Activated CD8-positive, alpha-beta T cell treated with anti-CD3 and anti-CD28 coated beads for 36 hours (primary cell): ENCODE measurements at regions of chr6 and their contacts with region 1.

Region 1: DNA sequence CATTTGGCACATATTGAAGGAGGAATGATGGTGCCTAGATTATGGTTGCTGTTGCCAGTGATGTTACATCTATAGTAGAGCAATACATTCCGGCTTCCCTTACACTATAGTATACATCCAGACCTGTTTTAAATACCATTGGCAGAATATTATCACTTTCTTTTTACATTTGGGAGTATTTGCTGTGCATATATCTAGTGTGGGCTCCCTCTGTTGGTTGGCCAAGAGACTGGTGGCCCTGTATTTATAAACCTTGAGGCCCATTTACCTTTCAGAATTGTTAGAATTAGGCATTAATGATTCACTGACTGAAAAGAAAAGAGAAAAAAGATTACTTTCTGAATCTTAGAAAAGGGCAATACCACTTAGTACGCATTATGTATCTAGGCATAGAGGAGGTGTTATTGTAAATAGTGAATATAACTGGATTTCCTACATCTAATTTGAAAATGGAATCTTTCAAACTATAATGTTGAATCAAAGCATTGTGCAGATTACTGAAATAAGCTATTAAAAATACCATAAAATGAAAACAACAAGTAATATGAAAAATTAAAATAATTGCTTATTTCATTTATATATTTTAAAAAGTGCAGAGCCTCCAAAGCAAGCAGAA is 628.8 kb upstream of the MAN1A1 start:
- DNase-seq: peak; percentile 22
- ATAC-seq: no peak
- H3K4me3 Mint-ChIP-seq: no peak overlapping the region
- H3K27ac Mint-ChIP-seq: no peak overlapping the region
- H3K4me1 Mint-ChIP-seq: no peaks in the 10 kb centered on the region
- H3K27me3 Mint-ChIP-seq: no peaks in the 10 kb centered on the region
- CTCF ChIP-seq: no peak

Region 2: GRCh38 chr6:119742188-119742803 is 236.1 kb before region 1 on chr6:
- CTCF ChIA-PET with region 1: interaction called, 3 read pairs
- POLR2A ChIA-PET with region 1: no interaction called
- intact Hi-C with region 1: loop called (anchors 10 kb)
- DNase-seq: peak; percentile 84
- ATAC-seq: peak; percentile 51
- H3K4me3 Mint-ChIP-seq: no peak overlapping the region
- H3K27ac Mint-ChIP-seq: no peak overlapping the region
- H3K4me1 Mint-ChIP-seq: no peaks in the 10 kb centered on the region
- H3K27me3 Mint-ChIP-seq: peaks cover 3% of the 10 kb centered on the region
- CTCF ChIP-seq: peak; percentile 81

Region 3: GRCh38 chr6:120103616-120104015 is 125.2 kb after region 1 on chr6:
- CTCF ChIA-PET with region 1: no interaction called
- POLR2A ChIA-PET with region 1: no interaction called
- intact Hi-C with region 1: no loop called
- DNase-seq: no peak
- ATAC-seq: no peak
- H3K4me3 Mint-ChIP-seq: no peak overlapping the region
- H3K27ac Mint-ChIP-seq: no peak overlapping the region
- H3K4me1 Mint-ChIP-seq: no peaks in the 10 kb centered on the region
- H3K27me3 Mint-ChIP-seq: no peaks in the 10 kb centered on the region
- CTCF ChIP-seq: no peak